ENCODE measurements at regions of chr11 and their contacts with region 1.

Region 1: DNA sequence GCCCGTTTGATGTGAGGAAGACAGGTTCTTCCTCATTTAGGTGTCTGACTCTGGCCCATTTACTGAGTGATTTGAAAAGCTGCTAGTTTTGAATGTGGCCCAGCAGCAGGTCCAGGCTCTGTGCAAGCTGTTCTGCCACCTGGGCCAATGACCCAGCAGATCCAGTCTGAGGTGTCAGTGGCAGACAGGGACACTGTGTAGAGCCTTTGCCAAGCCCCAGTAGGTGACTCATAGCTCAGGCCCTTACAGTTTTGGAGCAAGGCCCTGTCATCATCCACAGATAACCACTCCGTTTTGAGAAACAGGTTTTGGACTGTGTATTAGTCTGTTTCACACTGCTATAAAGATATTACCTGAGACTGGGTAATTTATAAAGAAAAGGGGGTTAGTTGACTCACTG is 23.9 kb downstream of the TSPAN32 start:
- DNase-seq: no peak
- H3K4me3 ChIP-seq: no peak overlapping the region
- H3K27ac ChIP-seq: no peak overlapping the region
- H3K4me1 ChIP-seq: no peaks in the 10 kb centered on the region
- H3K27me3 ChIP-seq: no peaks in the 10 kb centered on the region
- CTCF ChIP-seq: no peak

Region 2: GRCh38 chr11:2252018-2252417 is 73.7 kb before region 1 on chr11:
- CTCF ChIA-PET with region 1: interaction called, 16 read pairs
- POLR2A ChIA-PET with region 1: no interaction called
- intact Hi-C with region 1: no loop called
- DNase-seq: no peak
- H3K4me3 ChIP-seq: no peak overlapping the region
- H3K27ac ChIP-seq: no peak overlapping the region
- H3K4me1 ChIP-seq: no peaks in the 10 kb centered on the region
- H3K27me3 ChIP-seq: no peaks in the 10 kb centered on the region
- CTCF ChIP-seq: no peak

Measured in A673 (cell line).